ENCODE measurements at regions of chr6 and their contacts with region 1.

Region 1: GRCh38 chr6:82270881-82271645 is 23.5 kb upstream of the IBTK start:
- DNase-seq: no peak
- H3K4me3 ChIP-seq: no peak overlapping the region
- H3K27ac ChIP-seq: no peak overlapping the region
- H3K4me1 ChIP-seq: no peaks in the 10 kb centered on the region
- H3K27me3 ChIP-seq: no peaks in the 10 kb centered on the region
- CTCF ChIP-seq: peak; percentile 36 to 39

Region 2: GRCh38 chr6:82298012-82298411 is 26.9 kb after region 1 on chr6:
- intact Hi-C with region 1: no loop called
- DNase-seq: no peak
- H3K4me3 ChIP-seq: no peak overlapping the region
- H3K27ac ChIP-seq: no peak overlapping the region
- H3K4me1 ChIP-seq: no peaks in the 10 kb centered on the region
- H3K27me3 ChIP-seq: no peaks in the 10 kb centered on the region
- CTCF ChIP-seq: no peak

Region 3: DNA sequence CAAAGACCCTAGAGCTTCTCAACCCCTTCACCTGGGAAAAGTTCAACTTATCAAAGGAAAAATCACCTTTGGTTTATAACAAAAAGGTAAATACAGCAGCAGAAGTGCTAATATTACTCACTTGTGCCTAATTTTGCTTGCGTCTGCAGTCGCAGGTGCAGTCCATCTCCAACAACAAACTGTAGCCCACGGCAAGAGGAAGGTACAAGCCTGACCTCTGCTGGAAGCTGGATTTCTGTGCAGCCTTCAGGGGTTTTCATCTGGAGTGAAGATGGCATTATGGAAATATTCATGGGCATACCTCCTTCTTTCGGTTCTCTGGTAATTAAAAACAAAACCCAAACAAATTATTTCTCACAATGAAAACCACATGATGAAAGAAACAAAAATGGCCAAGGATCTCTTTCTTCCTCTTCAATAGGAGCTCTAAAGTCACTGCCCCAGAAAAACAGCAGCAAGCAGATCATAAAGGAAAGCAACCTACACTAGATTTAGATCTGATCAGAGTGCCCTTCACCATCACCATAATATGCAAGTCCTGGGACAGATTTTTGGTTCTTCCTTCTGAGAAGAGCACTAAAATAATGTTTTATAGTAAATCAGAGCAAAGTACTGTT is 786.8 kb after region 1 on chr6:
- intact Hi-C with region 1: loop called (anchors 5 kb)
- DNase-seq: no peak
- H3K4me3 ChIP-seq: no peak overlapping the region
- H3K27ac ChIP-seq: no peak overlapping the region
- H3K4me1 ChIP-seq: no peaks in the 10 kb centered on the region
- H3K27me3 ChIP-seq: no peaks in the 10 kb centered on the region
- CTCF ChIP-seq: peak; percentile 10 to 39